ENCODE measurements at regions of chrX and their contacts with region 1.

Region 1: GRCh38 chrX:74421036-74421739 is at the start of gene SLC16A2:
- DNase-seq: peak; percentile 72 to 82 (median 77)
- H3K4me3 ChIP-seq: peak within 1 kb of the TSS; percentile 52
- H3K27ac ChIP-seq: peak within 1 kb of the TSS; percentile 83 to 94
- H3K4me1 ChIP-seq: no peaks in the 10 kb centered on the region
- H3K27me3 ChIP-seq: no peaks in the 10 kb centered on the region
- CTCF ChIP-seq: no peak
- EP300 ChIP-seq: no peak
- POLR2A ChIP-seq: no peak
- total RNA-seq, gene SLC16A2: 8.1 to 41.4 (median 24.1) TPM

Region 2: DNA sequence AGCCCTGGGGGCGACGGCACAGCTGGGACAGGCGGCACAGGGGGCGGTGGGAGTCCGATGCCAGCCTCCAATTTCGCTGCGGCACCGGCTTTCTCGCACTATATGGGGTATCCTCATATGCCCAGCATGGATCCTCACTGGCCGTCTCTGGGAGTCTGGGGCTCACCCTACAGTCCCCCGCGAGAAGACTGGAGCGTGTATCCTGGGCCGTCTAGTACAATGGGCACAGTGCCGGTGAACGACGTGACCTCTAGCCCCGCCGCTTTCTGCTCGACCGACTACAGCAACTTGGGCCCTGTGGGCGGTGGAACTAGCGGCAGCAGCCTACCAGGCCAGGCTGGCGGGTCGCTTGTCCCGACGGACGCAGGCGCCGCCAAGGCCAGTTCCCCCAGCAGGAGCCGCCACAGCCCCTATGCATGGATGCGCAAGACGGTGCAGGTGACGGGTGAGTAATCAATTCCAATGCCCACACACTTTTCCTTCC is 973.8 kb before region 1 on chrX:
- intact Hi-C with region 1: no loop called
- DNase-seq: no peak
- H3K4me3 ChIP-seq: no peak overlapping the region
- H3K27ac ChIP-seq: no peak overlapping the region
- H3K4me1 ChIP-seq: no peaks in the 10 kb centered on the region
- H3K27me3 ChIP-seq: no peaks in the 10 kb centered on the region
- CTCF ChIP-seq: no peak
- EP300 ChIP-seq: no peak
- POLR2A ChIP-seq: no peak

Region 3: GRCh38 chrX:74262452-74263209 is 158.6 kb before region 1 on chrX:
- intact Hi-C with region 1: no loop called
- DNase-seq: no peak
- H3K4me3 ChIP-seq: no peak overlapping the region
- H3K27ac ChIP-seq: no peak overlapping the region
- H3K4me1 ChIP-seq: no peaks in the 10 kb centered on the region
- H3K27me3 ChIP-seq: no peaks in the 10 kb centered on the region
- CTCF ChIP-seq: no peak
- EP300 ChIP-seq: no peak
- POLR2A ChIP-seq: no peak

Region 4: DNA sequence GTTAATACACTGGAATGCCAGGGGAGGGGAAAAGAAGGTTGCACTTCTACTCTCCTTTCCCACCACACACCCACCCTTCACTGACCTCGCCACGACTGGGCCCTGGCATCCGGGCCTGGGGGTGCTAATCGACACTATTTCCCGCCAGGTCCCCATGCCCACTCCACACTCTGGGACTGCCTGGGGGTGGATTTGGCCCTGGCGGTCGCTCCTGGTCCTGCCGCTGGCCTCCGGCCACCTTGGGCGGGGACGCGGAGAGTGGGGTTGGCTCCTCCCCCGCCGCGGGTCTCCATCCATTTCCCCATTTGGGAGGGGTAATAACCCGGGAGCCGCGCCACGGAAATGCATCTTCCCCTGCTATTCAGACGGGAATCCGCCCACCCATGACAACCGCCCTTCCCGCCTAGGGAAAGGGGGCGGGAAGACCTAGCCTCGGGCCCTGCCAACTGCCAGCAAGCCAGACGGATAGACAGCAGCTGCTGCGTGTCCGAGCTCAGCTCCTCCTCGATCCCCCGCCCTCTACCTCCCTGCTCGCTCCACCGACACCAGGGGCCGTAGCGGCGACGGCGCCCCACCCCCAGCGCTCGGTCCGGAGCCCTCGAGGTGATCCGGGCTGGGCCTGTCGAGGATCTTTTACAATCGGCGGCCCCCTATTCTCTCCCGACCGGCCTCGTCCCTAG is 115.1 kb after region 1 on chrX:
- intact Hi-C with region 1: loop called in 2 of 4 experiments (anchors 2 to 10 kb)
- DNase-seq: peak; percentile 89 to 92 (median 90)
- H3K4me3 ChIP-seq: peak overlapping the region; percentile 37
- H3K27ac ChIP-seq: peak overlapping the region; percentile 79 to 85
- H3K4me1 ChIP-seq: no peaks in the 10 kb centered on the region
- H3K27me3 ChIP-seq: no peaks in the 10 kb centered on the region
- CTCF ChIP-seq: peak in 2 of 3 donors; percentile 48 to 51
- EP300 ChIP-seq: no peak
- POLR2A ChIP-seq: peak; percentile 56

Region 5: GRCh38 chrX:74614093-74614909 is 193.1 kb after region 1 on chrX and contains the start of gene RLIM:
- intact Hi-C with region 1: loop called in 1 of 4 experiments (anchors 5 kb)
- DNase-seq: peak; percentile 89 to 94 (median 91)
- H3K4me3 ChIP-seq: peak within 1 kb of the TSS; percentile 86
- H3K27ac ChIP-seq: peak within 1 kb of the TSS; percentile 56 to 90
- H3K4me1 ChIP-seq: no peaks in the 10 kb centered on the region
- H3K27me3 ChIP-seq: no peaks in the 10 kb centered on the region
- CTCF ChIP-seq: no peak
- EP300 ChIP-seq: peak; percentile 97
- POLR2A ChIP-seq: peak; percentile 83
- total RNA-seq, gene RLIM: 25.2 to 44.5 (median 34.2) TPM